AG04450 (cell line): ENCODE measurements at regions of chr9 and their contacts with region 1.

Region 1: DNA sequence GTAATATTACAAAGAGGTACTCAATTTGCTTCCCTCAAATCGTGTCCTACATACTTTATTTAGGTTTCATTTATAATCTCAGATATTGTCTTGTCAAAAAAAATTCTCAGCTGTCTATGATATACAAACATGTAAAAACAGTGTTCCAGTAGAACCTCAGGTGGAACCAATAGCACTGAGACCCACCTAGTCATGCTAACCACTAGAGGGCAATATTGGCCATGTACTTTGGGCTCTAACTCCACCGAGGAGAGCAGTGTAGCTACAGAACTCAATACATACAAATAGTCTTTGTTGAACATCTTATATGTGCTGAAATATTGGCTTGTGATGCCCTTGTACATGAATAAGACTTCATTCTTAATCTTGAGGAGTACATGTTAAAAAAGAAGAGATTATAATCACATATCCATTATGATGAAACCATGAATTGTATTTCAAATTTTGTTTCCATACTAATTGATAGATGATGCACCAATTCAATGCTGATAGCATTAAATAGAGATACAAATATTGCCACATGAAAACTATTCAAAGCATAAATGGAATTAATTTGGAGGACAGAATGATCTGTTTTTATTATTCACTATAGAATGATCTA is 71.2 kb upstream of the CNTLN start:
- DNase-seq: peak; percentile 23
- H3K4me3 ChIP-seq: no peak overlapping the region
- H3K27ac ChIP-seq: no peak overlapping the region
- H3K27me3 ChIP-seq: no peaks in the 10 kb centered on the region
- CTCF ChIP-seq: peak; percentile 84

Region 2: GRCh38 chr9:16705121-16705604 is 358.5 kb before region 1 on chr9:
- CTCF ChIA-PET with region 1: no interaction called
- POLR2A ChIA-PET with region 1: no interaction called
- DNase-seq: peak; percentile 83
- H3K4me3 ChIP-seq: peak overlapping the region; percentile 50
- H3K27ac ChIP-seq: peak overlapping the region; percentile 98
- H3K27me3 ChIP-seq: no peaks in the 10 kb centered on the region
- CTCF ChIP-seq: no peak

Region 3: GRCh38 chr9:16871356-16872151 is 192.1 kb before region 1 on chr9:
- CTCF ChIA-PET with region 1: interaction called, 10 read pairs
- POLR2A ChIA-PET with region 1: no interaction called
- DNase-seq: no peak
- H3K4me3 ChIP-seq: peak overlapping the region; percentile 80
- H3K27ac ChIP-seq: peak overlapping the region; percentile 92
- H3K27me3 ChIP-seq: no peaks in the 10 kb centered on the region
- CTCF ChIP-seq: no peak

Region 4: DNA sequence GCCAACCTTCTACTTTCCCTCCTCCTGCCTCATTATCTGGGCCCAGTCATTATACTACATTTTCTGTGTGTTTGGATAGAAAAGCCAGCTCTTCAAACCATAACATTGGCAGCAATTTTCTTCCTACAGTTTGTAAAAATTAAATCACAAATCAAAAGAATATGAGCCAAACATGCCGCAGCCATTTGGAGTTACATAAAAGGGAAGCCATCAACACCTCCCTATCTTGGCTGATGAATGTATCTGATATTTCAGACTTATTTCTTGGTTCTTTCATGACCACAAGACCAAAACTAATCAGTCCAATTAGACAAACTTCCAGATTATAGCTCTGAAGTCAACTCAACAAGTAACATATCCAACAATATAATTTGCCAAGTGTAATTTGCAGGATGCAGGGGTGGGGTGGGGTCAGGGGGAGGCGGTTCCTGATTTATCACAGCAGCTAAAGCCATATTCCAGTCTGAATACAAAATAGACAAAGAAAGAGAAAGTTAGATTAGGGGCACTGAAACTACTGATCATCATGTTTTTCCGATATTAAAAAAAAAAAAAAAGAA is 18.2 kb before region 1 on chr9:
- CTCF ChIA-PET with region 1: interaction called, 16 read pairs
- POLR2A ChIA-PET with region 1: no interaction called
- DNase-seq: no peak
- H3K4me3 ChIP-seq: no peak overlapping the region
- H3K27ac ChIP-seq: no peak overlapping the region
- H3K27me3 ChIP-seq: no peaks in the 10 kb centered on the region
- CTCF ChIP-seq: no peak

Region 5: DNA sequence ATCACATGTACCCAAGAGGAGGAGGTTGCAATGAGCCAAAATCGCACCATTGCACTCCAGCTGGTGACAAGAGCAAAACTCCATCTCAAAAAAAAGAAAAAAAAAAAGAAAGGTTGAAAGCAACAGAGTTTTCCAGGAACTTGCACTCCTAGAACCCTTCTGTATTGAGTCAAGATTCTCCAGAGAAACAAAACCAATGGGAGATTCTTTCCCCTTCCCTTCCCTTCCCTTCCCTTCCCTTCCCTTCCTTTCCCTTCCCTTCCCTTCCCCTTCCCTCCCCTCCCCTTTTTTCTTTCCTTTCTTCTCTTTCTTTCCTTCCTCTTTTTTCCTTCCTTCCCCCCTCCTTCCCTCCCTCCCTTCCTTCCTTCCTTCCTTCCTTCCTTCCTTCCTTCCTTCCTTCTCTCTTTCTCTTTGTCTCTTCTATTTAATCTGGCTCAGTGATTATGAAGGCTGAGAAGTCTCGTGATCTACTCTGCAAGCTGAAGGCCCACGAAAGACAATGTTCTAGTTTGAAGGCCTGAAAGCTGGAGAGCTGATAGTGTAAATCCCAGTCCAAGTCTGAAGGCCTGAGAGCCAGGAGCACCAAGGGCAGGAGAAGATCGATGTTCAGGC is 11.6 kb after region 1 on chr9:
- CTCF ChIA-PET with region 1: interaction called, 13 read pairs
- POLR2A ChIA-PET with region 1: no interaction called
- DNase-seq: no peak
- H3K4me3 ChIP-seq: no peak overlapping the region
- H3K27ac ChIP-seq: no peak overlapping the region
- H3K27me3 ChIP-seq: no peaks in the 10 kb centered on the region
- CTCF ChIP-seq: no peak

Region 6: GRCh38 chr9:17462869-17463464 is 399.3 kb after region 1 on chr9:
- CTCF ChIA-PET with region 1: interaction called, 56 read pairs
- POLR2A ChIA-PET with region 1: no interaction called
- DNase-seq: peak; percentile 45
- H3K4me3 ChIP-seq: no peak overlapping the region
- H3K27ac ChIP-seq: no peak overlapping the region
- H3K27me3 ChIP-seq: no peaks in the 10 kb centered on the region
- CTCF ChIP-seq: peak; percentile 73